Left ventricle myocardium inferior (tissue), 1 donor: ENCODE measurements at regions of chr4 and their contacts with region 1.

Region 1: GRCh38 chr4:100517864-100518341 is at the start of gene EMCN:
- DNase-seq: no peak
- H3K4me3 ChIP-seq: peak within 1 kb of the TSS; percentile 63
- H3K27ac ChIP-seq: peak within 1 kb of the TSS; percentile 81
- H3K4me1 ChIP-seq: peaks cover 12% of the 10 kb centered on the region
- H3K27me3 ChIP-seq: no peaks in the 10 kb centered on the region
- CTCF ChIP-seq: no peak
- total RNA-seq, gene EMCN: 43.6 TPM

Region 2: GRCh38 chr4:100657187-100657586 is 139.3 kb after region 1 on chr4:
- intact Hi-C with region 1: loop called (anchors 10 kb)
- DNase-seq: no peak
- H3K4me3 ChIP-seq: no peak overlapping the region
- H3K27ac ChIP-seq: peak overlapping the region; percentile 35
- H3K4me1 ChIP-seq: peaks cover 14% of the 10 kb centered on the region
- H3K27me3 ChIP-seq: no peaks in the 10 kb centered on the region
- CTCF ChIP-seq: no peak